A673 (cell line): ENCODE measurements at regions of chr11 and their contacts with region 1.

Region 1: DNA sequence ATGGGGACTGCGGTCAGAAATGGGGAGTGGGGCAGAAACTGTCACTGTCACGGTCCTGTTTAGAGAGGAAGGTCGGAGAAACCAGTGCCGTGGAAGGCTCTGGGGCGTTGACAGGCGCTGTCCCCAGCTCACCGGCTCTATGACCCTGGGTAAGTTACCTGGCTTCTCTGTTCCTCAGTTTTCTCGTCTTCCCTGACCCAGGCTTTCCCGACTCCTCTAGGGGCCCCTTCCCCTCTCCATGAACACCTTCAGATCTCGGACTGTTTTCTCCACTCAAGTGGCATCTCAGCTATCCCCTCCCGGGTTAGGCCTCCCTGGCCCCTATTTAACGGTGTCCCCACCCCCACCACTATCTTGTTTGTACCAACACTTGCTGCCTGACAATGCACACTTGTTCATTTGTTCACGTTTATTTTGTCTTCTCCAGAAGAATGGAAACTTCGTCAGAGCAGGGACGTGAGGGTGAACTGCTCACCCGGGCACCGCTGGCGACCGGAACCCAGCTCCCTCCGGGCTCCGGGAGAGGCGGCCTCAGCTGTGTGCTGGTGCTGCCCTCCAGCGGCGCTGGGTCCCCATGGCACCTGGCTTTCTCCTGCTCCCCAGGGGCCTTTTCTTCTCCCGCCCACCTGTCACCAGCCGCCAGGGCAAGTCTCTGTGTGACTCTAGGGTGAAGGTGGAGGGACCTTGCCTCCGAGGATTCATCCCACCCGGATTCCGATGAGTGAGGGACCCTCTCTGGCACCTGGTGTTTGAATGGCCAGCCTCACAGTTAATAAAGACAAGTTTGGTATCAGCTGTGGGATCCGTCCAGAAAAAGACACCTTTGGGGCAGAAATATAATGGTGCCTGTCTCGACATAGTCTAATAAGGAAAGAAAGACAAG is 33.1 kb upstream of the SLC35C1 start:
- DNase-seq: peak; percentile 97
- H3K4me3 ChIP-seq: peak overlapping the region; percentile 48
- H3K27ac ChIP-seq: no peak overlapping the region
- H3K4me1 ChIP-seq: peaks cover 13% of the 10 kb centered on the region
- H3K27me3 ChIP-seq: no peaks in the 10 kb centered on the region
- CTCF ChIP-seq: peak; percentile 100

Region 2: DNA sequence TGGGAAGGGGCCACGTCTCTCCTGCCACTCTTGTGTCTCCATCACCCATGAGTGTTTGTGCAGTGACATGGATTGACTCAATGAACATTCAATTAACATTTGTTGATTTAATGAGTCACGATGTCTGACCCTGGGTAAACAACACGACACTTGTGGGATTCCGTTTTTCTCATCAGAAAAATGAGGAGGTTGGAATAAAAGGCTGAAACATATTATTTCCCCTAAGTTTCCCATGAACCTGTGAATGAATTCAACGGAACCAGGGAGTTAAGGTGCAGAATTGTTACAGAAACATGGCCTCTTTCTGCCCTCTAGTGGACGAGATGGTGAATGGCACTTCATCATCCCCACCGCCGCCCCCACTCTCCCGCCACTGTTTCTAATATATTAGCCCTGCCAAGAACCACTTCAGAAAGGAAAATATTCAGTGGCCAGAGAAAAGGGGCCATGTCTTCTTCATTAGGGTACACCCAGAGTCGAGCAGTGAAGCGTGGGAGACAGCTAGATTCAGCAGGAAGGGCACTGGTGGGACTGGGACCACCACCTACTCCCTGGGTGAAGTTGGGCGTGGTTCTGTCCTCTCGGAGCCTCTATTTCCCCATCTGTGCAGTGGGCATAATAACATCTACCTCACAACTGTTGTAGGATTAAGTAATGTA is 439.4 kb before region 1 on chr11:
- CTCF ChIA-PET with region 1: interaction called, 10 read pairs
- POLR2A ChIA-PET with region 1: no interaction called
- intact Hi-C with region 1: no loop called
- DNase-seq: peak; percentile 80
- H3K4me3 ChIP-seq: no peak overlapping the region
- H3K27ac ChIP-seq: no peak overlapping the region
- H3K4me1 ChIP-seq: peaks cover 11% of the 10 kb centered on the region
- H3K27me3 ChIP-seq: no peaks in the 10 kb centered on the region
- CTCF ChIP-seq: peak; percentile 91

Region 3: GRCh38 chr11:45371251-45372115 is 400.3 kb before region 1 on chr11:
- CTCF ChIA-PET with region 1: interaction called, 86 read pairs
- POLR2A ChIA-PET with region 1: no interaction called
- intact Hi-C with region 1: loop called (anchors 1 kb)
- DNase-seq: peak; percentile 91
- H3K4me3 ChIP-seq: no peak overlapping the region
- H3K27ac ChIP-seq: no peak overlapping the region
- H3K4me1 ChIP-seq: peaks cover 15% of the 10 kb centered on the region
- H3K27me3 ChIP-seq: no peaks in the 10 kb centered on the region
- CTCF ChIP-seq: peak; percentile 100

Region 4: GRCh38 chr11:45405916-45406670 is 365.7 kb before region 1 on chr11:
- CTCF ChIA-PET with region 1: interaction called, 16 read pairs
- POLR2A ChIA-PET with region 1: no interaction called
- intact Hi-C with region 1: no loop called
- DNase-seq: peak; percentile 49
- H3K4me3 ChIP-seq: no peak overlapping the region
- H3K27ac ChIP-seq: no peak overlapping the region
- H3K4me1 ChIP-seq: no peaks in the 10 kb centered on the region
- H3K27me3 ChIP-seq: no peaks in the 10 kb centered on the region
- CTCF ChIP-seq: peak; percentile 89

Region 5: DNA sequence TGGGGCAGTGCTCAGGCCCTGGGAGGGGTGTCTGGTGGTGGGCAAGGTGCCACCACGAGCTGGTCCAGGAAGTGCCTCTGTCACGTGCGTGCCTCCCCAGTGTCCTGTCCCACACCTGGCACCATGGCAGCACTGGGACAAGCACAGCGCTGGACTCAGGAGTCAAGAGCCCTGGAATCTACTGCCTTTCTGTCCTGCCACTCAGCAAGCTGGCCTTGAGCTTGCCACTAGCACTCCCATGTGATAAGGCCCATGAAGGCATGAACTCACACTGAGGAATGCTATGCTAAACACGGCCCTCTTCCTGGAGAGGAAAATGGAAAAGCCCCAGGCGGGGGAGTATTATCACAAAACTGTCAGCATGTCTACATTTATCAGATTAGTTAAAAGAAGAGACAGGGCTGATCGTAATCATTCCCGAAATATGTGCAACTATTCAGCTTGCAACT is 17.5 kb before region 1 on chr11:
- CTCF ChIA-PET with region 1: interaction called, 28 read pairs
- POLR2A ChIA-PET with region 1: no interaction called
- intact Hi-C with region 1: no loop called
- DNase-seq: peak; percentile 85
- H3K4me3 ChIP-seq: no peak overlapping the region
- H3K27ac ChIP-seq: peak overlapping the region; percentile 33
- H3K4me1 ChIP-seq: peaks cover 26% of the 10 kb centered on the region
- H3K27me3 ChIP-seq: no peaks in the 10 kb centered on the region
- CTCF ChIP-seq: no peak

Region 6: DNA sequence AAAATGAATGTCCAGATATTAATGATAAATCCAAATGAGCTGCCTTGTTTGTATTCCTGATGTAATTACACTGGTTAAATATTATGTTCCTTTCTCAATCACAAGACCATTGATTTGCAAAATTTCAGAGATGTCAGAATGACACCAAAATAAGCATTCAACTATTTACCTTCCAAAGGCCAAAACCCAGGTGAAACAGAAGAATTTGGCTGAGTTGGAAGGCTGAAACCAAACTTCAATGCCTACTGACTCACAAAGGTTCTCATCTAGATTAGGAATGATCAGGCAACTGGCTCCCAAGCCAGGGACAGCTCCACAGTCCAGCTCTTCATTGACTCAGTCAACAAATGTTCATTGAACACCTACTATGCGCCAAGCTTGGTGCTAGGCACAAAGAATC is 19.7 kb after region 1 on chr11:
- CTCF ChIA-PET with region 1: no interaction called
- POLR2A ChIA-PET with region 1: no interaction called
- intact Hi-C with region 1: no loop called
- DNase-seq: no peak
- H3K4me3 ChIP-seq: no peak overlapping the region
- H3K27ac ChIP-seq: no peak overlapping the region
- H3K4me1 ChIP-seq: no peaks in the 10 kb centered on the region
- H3K27me3 ChIP-seq: no peaks in the 10 kb centered on the region
- CTCF ChIP-seq: no peak

Region 7: DNA sequence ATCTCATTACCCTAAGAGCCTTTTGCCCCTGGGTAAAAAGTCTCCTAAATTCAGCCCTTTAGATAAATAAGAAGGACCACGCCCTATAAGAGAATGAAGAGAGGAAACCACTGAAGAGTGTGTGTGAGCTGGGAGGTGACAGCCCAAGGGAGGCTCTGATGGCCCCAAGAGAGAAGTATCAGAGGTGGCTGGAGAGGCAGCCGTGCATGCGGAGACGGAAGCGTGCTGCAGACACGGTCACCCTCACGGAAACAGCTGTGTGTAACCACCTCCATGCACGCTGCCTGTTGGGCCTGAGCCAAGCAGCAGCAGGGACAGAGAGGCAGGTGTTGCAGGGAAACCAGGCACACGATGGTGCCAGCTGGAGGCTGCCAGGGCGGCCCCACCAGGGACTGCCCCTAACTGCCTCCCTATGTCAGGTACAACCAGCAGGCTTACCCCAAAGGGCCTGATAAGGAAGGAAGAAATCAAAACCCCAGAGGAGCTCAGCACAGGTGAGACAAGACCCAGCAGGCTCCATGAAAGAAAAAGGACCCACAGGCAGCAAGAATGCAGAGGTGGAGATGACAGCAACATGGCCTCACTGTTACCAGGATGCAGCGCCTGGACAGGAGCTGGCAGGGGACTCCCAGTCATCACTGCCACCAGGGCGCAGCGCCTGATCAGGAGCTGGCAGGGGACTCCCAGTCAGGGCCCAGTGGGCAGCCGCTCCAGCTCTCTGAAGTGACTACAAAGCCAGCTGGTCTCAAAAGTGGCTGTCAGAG is 158.4 kb after region 1 on chr11:
- CTCF ChIA-PET with region 1: no interaction called
- POLR2A ChIA-PET with region 1: no interaction called
- intact Hi-C with region 1: no loop called
- DNase-seq: no peak
- H3K4me3 ChIP-seq: no peak overlapping the region
- H3K27ac ChIP-seq: no peak overlapping the region
- H3K4me1 ChIP-seq: no peaks in the 10 kb centered on the region
- H3K27me3 ChIP-seq: no peaks in the 10 kb centered on the region
- CTCF ChIP-seq: 0 out of 2 replicates have a peak, but pooled peaks have one; percentile 10

Region 8: GRCh38 chr11:46006418-46007070 is 234.7 kb after region 1 on chr11:
- CTCF ChIA-PET with region 1: interaction called, 16 read pairs
- POLR2A ChIA-PET with region 1: no interaction called
- intact Hi-C with region 1: no loop called
- DNase-seq: peak; percentile 95
- H3K4me3 ChIP-seq: no peak overlapping the region
- H3K27ac ChIP-seq: no peak overlapping the region
- H3K4me1 ChIP-seq: peaks cover 28% of the 10 kb centered on the region
- H3K27me3 ChIP-seq: no peaks in the 10 kb centered on the region
- CTCF ChIP-seq: peak; percentile 100

Region 9: DNA sequence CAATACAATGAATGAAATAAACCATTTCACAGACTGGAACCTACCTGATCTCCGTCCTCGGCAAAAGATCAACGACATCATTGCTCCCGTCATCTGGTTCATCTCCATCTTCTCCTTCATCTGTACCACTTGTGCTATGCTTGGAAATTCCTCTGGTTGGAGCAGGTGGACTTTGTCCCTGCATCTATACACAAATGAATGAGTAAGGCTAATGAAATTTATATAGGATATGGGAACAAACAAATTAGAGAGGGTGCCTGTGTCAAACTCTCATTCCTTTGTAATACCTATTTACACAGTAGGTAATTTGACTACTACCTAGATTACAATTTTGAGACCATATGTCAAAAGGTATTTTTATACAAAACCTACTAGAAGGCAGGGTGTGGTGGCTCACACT is 1006.6 kb after region 1 on chr11:
- CTCF ChIA-PET with region 1: no interaction called
- POLR2A ChIA-PET with region 1: no interaction called
- intact Hi-C with region 1: no loop called
- DNase-seq: no peak
- H3K4me3 ChIP-seq: no peak overlapping the region
- H3K27ac ChIP-seq: no peak overlapping the region
- H3K4me1 ChIP-seq: no peaks in the 10 kb centered on the region
- H3K27me3 ChIP-seq: no peaks in the 10 kb centered on the region
- CTCF ChIP-seq: no peak